ENCODE measurements at regions of chr1 and their contacts with region 1.

Region 1: GRCh38 chr1:227343727-227344551 is 25.6 kb upstream of the CDC42BPA start:
- DNase-seq: peak in 1 of 2 experiments; percentile 87
- H3K4me3 ChIP-seq: no peak overlapping the region
- H3K27ac ChIP-seq: peak overlapping the region; percentile 69
- H3K4me1 ChIP-seq: peaks cover 15% of the 10 kb centered on the region
- H3K27me3 ChIP-seq: no peaks in the 10 kb centered on the region
- CTCF ChIP-seq: no peak

Region 2: DNA sequence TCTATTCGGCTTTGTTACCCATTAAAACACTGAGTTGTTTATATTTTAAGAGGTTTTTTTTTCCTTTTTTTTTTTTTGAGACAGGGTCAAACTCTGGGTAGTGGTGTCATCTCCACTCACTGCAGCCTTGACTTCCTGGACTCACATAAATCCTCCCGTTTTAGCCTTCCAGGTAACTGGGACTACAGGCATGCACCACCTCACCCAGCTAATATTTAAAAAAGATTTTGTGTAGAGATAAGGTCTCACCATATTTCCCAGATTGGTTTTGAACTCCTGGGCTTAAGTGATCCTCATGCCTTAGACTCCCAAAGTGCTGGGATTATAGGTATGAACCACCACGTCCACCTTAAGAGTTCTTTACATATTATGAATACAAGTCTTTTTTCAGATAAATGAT is 257.3 kb before region 1 on chr1:
- CTCF ChIA-PET with region 1: no interaction called
- POLR2A ChIA-PET with region 1: interaction called, 14 read pairs
- intact Hi-C with region 1: no loop called
- DNase-seq: no peak
- H3K4me3 ChIP-seq: no peak overlapping the region
- H3K27ac ChIP-seq: no peak overlapping the region
- H3K4me1 ChIP-seq: no peaks in the 10 kb centered on the region
- H3K27me3 ChIP-seq: no peaks in the 10 kb centered on the region
- CTCF ChIP-seq: no peak

Region 3: GRCh38 chr1:227210604-227211003 is 133.3 kb before region 1 on chr1:
- CTCF ChIA-PET with region 1: no interaction called
- POLR2A ChIA-PET with region 1: interaction called, 19 read pairs
- intact Hi-C with region 1: no loop called
- DNase-seq: no peak
- H3K4me3 ChIP-seq: no peak overlapping the region
- H3K27ac ChIP-seq: no peak overlapping the region
- H3K4me1 ChIP-seq: no peaks in the 10 kb centered on the region
- H3K27me3 ChIP-seq: no peaks in the 10 kb centered on the region
- CTCF ChIP-seq: no peak

Region 4: GRCh38 chr1:227416156-227416830 is 72.4 kb after region 1 on chr1:
- CTCF ChIA-PET with region 1: no interaction called
- POLR2A ChIA-PET with region 1: interaction called, 13 read pairs
- intact Hi-C with region 1: no loop called
- DNase-seq: no peak
- H3K4me3 ChIP-seq: no peak overlapping the region
- H3K27ac ChIP-seq: no peak overlapping the region
- H3K4me1 ChIP-seq: no peaks in the 10 kb centered on the region
- H3K27me3 ChIP-seq: no peaks in the 10 kb centered on the region
- CTCF ChIP-seq: no peak